Activated B cell treated with CpG ODN at 0.5 μM for 24 hours (primary cell): ENCODE measurements at regions of chr17 and their contacts with region 1.

Region 1: GRCh38 chr17:82863941-82864774 is 24.3 kb upstream of the ZNF750 start:
- DNase-seq: peak; percentile 61
- ATAC-seq: peak; percentile 88
- H3K4me3 Mint-ChIP-seq: peak overlapping the region; percentile 70
- H3K27ac Mint-ChIP-seq: peak overlapping the region; percentile 90
- H3K4me1 Mint-ChIP-seq: peaks cover 78% of the 10 kb centered on the region
- H3K27me3 Mint-ChIP-seq: peaks cover 3% of the 10 kb centered on the region
- CTCF ChIP-seq: no peak

Region 2: GRCh38 chr17:82615084-82616020 is 248.8 kb before region 1 on chr17:
- CTCF ChIA-PET with region 1: no interaction called
- POLR2A ChIA-PET with region 1: no interaction called
- intact Hi-C with region 1: no loop called
- DNase-seq: no peak
- ATAC-seq: no peak
- H3K4me3 Mint-ChIP-seq: no peak overlapping the region
- H3K27ac Mint-ChIP-seq: no peak overlapping the region
- H3K4me1 Mint-ChIP-seq: no peaks in the 10 kb centered on the region
- H3K27me3 Mint-ChIP-seq: no peaks in the 10 kb centered on the region
- CTCF ChIP-seq: no peak

Region 3: DNA sequence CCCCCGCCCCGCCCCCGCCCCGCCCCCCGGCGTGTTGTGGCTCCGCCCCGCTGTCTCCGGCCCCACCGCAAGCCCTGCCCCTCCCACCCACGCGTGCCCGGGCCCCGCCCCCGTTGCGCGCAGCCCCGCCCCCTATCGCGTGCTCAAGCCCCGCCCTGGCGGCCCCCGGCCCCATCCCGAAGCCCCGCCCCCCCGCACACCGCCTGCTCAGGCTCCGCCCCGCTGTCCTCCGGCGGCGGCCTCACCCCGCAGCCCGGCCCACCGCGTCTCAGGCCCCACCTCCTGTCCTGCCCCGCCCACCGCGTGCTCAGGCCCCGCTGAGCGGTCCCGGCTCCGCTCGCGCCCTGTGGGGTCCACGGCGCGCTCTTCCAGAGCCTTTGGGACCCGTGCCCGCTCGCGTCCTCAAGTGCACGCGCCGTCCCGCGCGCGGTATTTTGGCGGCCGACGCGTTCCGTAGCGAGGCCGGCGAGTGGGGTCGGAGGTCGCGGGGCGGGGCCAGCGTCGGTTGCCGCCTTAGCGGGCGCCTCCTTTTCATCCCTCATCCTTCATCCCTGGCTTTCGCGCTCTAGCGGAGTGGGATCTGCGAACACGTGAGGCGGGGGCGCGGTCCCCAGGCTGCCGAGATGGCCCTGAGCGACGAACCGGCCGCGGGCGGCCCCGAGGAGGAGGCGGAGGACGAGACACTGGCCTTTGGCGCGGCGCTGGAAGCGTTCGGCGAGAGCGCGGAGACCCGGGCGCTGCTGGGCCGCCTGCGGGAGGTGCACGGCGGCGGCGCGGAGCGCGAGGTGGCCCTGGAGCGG is 112.4 kb before region 1 on chr17 and contains the start of gene TBCD:
- CTCF ChIA-PET with region 1: no interaction called
- POLR2A ChIA-PET with region 1: no interaction called
- intact Hi-C with region 1: loop called (anchors 1 kb)
- DNase-seq: peak; percentile 86
- ATAC-seq: peak; percentile 88
- H3K4me3 Mint-ChIP-seq: peak within 1 kb of the TSS; percentile 84
- H3K27ac Mint-ChIP-seq: no peak within 1 kb of the TSS
- H3K4me1 Mint-ChIP-seq: peaks cover 22% of the 10 kb centered on the region
- H3K27me3 Mint-ChIP-seq: no peaks in the 10 kb centered on the region
- CTCF ChIP-seq: no peak
- total RNA-seq, gene TBCD: 49.9 and 50.9 TPM in 2 replicates

Region 4: DNA sequence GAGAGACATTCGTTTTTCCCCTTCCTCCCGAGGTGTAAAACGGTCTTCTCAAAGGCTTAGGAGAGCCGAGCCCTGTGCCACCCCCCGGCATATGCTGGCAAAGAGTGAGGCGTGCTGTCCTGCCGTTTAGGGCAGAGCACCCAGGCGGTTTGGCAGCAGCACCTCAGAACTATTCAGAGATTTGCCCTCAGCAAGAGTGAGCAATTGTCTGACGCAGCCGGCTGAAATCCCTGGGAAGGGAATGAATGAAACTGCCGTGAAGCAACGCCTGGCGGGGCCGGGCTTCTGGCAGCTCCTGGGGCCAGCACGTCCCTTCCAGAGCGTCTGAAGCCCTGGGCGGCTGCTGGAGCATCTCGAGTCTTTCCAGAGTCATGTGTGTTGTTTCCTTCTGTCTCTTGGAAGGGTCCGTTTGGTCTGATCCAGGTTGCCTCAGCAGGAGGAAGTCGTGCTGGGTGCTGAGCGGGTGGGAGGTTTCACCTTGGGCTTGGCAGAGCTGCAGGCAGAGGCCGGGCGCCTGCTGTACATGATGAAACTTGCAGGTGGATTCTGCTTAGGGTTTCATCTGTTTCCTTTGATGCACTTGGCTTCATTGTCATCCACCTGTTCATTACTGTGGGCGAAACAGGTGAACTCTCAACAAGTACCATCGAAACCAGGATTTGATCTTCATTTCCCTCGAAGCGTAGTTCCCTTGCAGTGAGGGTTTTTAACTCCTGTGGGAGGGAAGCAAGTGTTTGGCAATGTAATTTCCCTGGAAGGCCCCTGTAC is 76.9 kb before region 1 on chr17:
- CTCF ChIA-PET with region 1: interaction called, 17 read pairs
- POLR2A ChIA-PET with region 1: interaction called, 6 read pairs
- intact Hi-C with region 1: loop called (anchors 5 kb)
- DNase-seq: no peak
- ATAC-seq: no peak
- H3K4me3 Mint-ChIP-seq: no peak overlapping the region
- H3K27ac Mint-ChIP-seq: no peak overlapping the region
- H3K4me1 Mint-ChIP-seq: no peaks in the 10 kb centered on the region
- H3K27me3 Mint-ChIP-seq: no peaks in the 10 kb centered on the region
- CTCF ChIP-seq: no peak

Region 5: GRCh38 chr17:82816358-82817149 is 47.6 kb before region 1 on chr17:
- CTCF ChIA-PET with region 1: interaction called, 14 read pairs
- POLR2A ChIA-PET with region 1: interaction called, 28 read pairs
- intact Hi-C with region 1: no loop called
- DNase-seq: no peak
- ATAC-seq: no peak
- H3K4me3 Mint-ChIP-seq: no peak overlapping the region
- H3K27ac Mint-ChIP-seq: no peak overlapping the region
- H3K4me1 Mint-ChIP-seq: peaks cover 29% of the 10 kb centered on the region
- H3K27me3 Mint-ChIP-seq: no peaks in the 10 kb centered on the region
- CTCF ChIP-seq: no peak

Region 6: DNA sequence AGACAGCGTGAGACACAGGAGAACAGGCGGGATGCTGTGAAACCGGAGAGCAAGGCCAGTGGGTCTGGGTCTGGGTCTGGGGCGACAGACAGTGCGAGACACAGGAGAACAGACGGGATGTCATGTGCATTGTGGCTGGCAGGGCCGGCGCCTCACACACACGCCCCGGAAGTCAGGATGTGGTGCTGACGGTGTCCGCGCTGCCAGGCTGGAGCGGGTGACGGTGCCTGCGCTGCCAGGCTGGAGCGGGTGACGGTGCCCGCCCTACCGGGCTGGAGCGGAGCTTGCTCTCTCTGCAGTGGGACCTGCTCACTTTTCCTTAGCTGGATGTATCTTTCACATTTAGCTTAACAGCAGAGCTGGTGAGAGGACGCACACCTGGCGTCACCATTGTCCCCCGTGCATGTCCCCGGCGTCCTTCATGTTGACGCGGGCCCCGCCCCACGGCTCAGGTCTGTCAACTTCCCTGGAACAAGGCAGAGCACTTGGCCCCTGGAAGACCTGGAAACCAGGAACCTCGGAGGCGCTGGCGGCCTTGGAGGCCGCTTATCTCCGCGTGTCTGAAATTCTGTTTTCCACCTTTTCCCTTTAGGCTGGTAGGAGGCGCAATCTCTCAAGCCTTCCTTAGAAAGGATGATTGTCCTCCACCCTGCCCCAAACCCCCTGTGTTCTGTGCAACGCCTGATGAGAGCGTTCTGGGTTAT is 18.7 kb after region 1 on chr17:
- CTCF ChIA-PET with region 1: interaction called, 4 read pairs
- POLR2A ChIA-PET with region 1: interaction called, 17 read pairs
- intact Hi-C with region 1: no loop called
- DNase-seq: no peak
- ATAC-seq: peak; percentile 47
- H3K4me3 Mint-ChIP-seq: peak overlapping the region; percentile 24
- H3K27ac Mint-ChIP-seq: no peak overlapping the region
- H3K4me1 Mint-ChIP-seq: peaks cover 55% of the 10 kb centered on the region
- H3K27me3 Mint-ChIP-seq: no peaks in the 10 kb centered on the region
- CTCF ChIP-seq: no peak

Region 7: DNA sequence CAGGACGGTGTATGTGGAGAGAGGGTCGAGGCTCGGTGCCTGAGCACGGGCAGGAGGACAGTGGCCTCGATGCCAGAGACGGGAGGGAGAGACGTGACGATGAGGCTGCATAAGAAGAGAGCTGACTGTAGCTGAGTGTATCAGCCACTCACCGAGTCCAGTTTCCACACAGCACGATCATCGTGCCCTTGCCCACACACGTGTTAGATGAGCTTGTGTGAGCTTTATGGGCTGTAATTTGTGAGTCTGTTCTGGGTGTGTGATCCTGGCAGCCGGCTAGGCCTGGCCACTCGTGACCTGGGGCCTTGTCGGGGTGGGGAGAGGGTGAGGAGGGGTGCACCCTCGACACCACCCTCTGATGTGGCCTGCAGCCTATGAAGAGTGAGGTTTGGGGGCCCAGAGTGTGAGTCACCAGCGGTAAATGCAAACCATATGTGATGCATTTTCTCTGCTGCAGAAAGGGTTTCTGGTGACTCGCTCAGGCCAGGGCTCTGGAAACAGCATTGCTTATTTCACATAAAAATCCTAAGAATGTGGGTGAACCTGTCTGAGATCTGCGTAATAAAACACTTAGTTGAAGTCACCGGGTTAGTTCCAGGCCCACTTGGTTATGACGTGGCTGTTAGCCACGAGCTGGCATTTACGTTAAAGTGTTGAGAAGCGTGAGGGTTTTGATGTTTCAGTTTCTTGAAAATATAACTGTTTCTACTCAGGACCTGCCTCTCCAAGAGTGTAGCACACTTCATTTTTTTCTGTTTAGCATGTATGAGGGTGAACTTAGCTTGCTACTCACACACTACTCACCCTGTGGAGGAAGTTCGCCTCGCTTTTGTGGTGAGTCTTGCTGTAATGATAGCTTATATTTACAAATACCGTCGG is 219.4 kb after region 1 on chr17:
- CTCF ChIA-PET with region 1: no interaction called
- POLR2A ChIA-PET with region 1: no interaction called
- intact Hi-C with region 1: loop called (anchors 2 kb)
- DNase-seq: no peak
- ATAC-seq: no peak
- H3K4me3 Mint-ChIP-seq: no peak overlapping the region
- H3K27ac Mint-ChIP-seq: peak overlapping the region; percentile 25
- H3K4me1 Mint-ChIP-seq: peaks cover 32% of the 10 kb centered on the region
- H3K27me3 Mint-ChIP-seq: no peaks in the 10 kb centered on the region
- CTCF ChIP-seq: no peak